ENCODE measurements at regions of chr17 and their contacts with region 1.

Region 1: GRCh38 chr17:49515196-49515770 is 20.2 kb downstream of the NGFR start:
- DNase-seq: peak; percentile 97
- H3K4me3 ChIP-seq: no peak overlapping the region
- H3K27ac ChIP-seq: peak overlapping the region; percentile 15 to 99; a peak in 3 of 4 replicates
- H3K4me1 ChIP-seq: peaks cover 7 to 76% of the 10 kb centered on the region in 2 experiments
- H3K27me3 ChIP-seq: peaks cover 2% of the 10 kb centered on the region; the same call in 1 of the 2 replicates
- CTCF ChIP-seq: no peak
- EP300 ChIP-seq: peak in 1 of 2 experiments; percentile 94; a peak in 2 of 4 replicates
- RAD21 ChIP-seq: peak; percentile 46; the same call in 1 of the 2 replicates

Region 2: GRCh38 chr17:49548506-49549310 is 33.4 kb after region 1 on chr17:
- CTCF ChIA-PET with region 1: interaction called, 149 read pairs
- POLR2A ChIA-PET with region 1: interaction called, 3 read pairs
- DNase-seq: peak; percentile 73
- H3K4me3 ChIP-seq: no peak overlapping the region; a peak in 1 of 4 replicates
- H3K27ac ChIP-seq: peak overlapping the region in 1 of 2 experiments; percentile 30; a peak in 1 of 4 replicates
- H3K4me1 ChIP-seq: peaks cover 0 to 43% of the 10 kb centered on the region in 2 experiments; a peak in 1 of 4 replicates
- H3K27me3 ChIP-seq: peaks cover 8% of the 10 kb centered on the region
- CTCF ChIP-seq: peak; percentile 68
- EP300 ChIP-seq: no peak
- RAD21 ChIP-seq: peak; percentile 81